MCF 10A (cell line): ENCODE measurements at regions of chr19 and their contacts with region 1.

Region 1: DNA sequence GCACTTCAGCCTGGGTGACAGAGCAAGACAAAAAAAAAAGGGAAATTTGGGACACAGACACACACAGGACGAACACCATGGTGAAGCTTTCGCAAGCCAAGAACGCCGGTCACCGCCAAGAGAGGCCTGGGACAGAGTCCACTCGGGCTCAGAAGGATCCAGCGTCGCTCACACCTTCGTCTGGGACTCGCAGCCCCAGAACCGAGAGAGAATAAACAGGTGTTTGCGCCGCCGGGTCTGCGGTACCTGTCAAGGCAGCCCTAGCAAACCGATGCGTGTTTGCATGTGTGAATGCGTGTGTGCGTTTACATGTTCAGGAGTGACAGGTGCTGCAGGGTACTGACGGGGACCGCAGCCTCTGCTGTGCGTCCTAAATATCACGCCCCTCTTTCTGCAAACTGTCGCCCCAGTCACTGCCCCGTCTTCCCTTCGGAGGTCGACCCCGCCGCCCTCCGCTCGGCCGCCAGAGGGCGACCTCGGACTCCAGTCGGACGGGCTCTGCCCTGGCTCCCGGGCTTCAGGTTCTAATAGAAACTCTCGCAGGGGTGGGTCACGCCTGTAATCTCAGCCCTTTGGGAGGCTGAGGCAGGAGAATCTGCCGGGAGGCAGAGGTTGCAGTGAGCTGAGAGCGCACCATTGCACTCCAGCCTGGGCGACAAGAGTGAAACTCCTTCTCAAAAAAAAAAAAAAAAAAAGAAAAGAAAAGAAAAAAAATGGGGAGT is 11.8 kb upstream of the CSNK1G2 start:
- DNase-seq: peak; percentile 76
- H3K4me3 Mint-ChIP-seq: peak overlapping the region; percentile 65
- H3K27ac Mint-ChIP-seq: no peak overlapping the region
- H3K4me1 Mint-ChIP-seq: peaks cover 14% of the 10 kb centered on the region
- H3K27me3 Mint-ChIP-seq: no peaks in the 10 kb centered on the region
- CTCF ChIP-seq: peak; percentile 85

Region 2: GRCh38 chr19:1913781-1914577 is 15.2 kb before region 1 on chr19:
- CTCF ChIA-PET with region 1: interaction called, 17 read pairs
- POLR2A ChIA-PET with region 1: no interaction called
- intact Hi-C with region 1: no loop called
- DNase-seq: peak; percentile 38
- H3K4me3 Mint-ChIP-seq: no peak overlapping the region
- H3K27ac Mint-ChIP-seq: no peak overlapping the region
- H3K4me1 Mint-ChIP-seq: peaks cover 6% of the 10 kb centered on the region
- H3K27me3 Mint-ChIP-seq: no peaks in the 10 kb centered on the region
- CTCF ChIP-seq: no peak

Region 3: DNA sequence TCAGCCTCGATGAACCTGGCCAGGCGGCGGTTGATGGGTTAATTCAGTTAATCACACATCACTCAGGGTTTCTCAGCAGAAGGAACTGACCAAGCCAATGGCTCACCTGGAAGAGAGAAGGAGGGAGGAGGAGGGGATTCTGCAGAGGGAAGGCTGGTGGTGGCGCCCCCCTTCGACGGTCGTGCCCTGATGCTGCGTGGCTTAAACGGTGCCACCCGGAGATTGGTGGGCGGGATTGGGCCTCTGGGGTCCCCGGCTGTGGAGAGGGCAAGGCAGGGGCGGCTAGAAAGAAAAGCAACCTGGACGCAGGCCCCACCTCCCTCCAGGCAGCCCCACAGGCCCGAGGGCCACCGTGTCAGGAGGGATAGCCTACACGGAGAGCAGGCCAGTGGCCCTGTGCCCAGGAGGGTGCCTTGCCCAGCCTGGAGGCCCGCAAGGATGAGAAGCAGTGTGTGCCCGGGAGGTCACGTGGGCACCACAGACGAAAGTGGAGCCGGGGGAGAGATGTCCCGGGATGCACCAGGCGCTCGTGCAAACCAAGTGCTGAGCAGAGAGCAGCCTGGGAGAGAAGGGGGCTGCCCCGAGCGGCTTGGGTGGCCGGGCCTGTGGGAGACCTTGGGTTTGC is 27.8 kb after region 1 on chr19:
- CTCF ChIA-PET with region 1: no interaction called
- POLR2A ChIA-PET with region 1: no interaction called
- intact Hi-C with region 1: no loop called
- DNase-seq: no peak
- H3K4me3 Mint-ChIP-seq: no peak overlapping the region
- H3K27ac Mint-ChIP-seq: no peak overlapping the region
- H3K4me1 Mint-ChIP-seq: no peaks in the 10 kb centered on the region
- H3K27me3 Mint-ChIP-seq: no peaks in the 10 kb centered on the region
- CTCF ChIP-seq: no peak